ENCODE measurements at regions of chr14 and their contacts with region 1.

Region 1: GRCh38 chr14:88168498-88169165 is 154.4 kb downstream of the KCNK10 start:
- DNase-seq: no peak

Region 2: GRCh38 chr14:87944987-87945604 is 223.5 kb before region 1 on chr14:
- intact Hi-C with region 1: loop called (anchors 5 kb)
- DNase-seq: no peak

Region 3: DNA sequence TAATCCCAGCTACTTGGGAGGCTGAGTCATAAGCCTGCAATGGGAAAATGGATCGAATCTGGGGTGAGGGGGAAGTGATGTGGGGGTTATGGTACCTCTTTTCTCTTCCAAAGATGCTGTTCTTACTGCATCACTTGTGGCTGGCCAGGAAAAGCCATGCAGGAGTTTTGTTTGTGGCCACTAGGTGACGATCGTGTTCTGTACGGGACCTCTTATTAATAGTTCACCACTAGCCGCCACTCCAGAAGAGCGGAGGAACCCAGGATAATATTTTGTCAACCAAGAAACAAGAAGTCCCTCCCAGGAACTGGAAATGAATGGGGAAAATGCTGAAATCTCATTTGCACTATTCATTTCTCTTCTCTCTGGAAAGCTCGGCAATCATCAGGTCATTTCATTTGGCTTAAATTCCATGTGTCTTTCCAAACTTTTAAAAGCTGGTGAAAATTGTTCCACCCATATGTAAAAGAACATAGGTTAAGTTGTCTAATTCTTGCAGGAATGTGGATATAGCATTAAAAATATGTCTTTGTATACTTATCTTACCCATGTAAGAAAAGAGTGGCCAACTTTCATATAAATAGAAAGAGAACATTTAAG is 154.8 kb before region 1 on chr14:
- intact Hi-C with region 1: loop called (anchors 2 kb)
- DNase-seq: peak; percentile 78